A549 (cell line): ENCODE measurements at regions of chr20 and their contacts with region 1.

Region 1: DNA sequence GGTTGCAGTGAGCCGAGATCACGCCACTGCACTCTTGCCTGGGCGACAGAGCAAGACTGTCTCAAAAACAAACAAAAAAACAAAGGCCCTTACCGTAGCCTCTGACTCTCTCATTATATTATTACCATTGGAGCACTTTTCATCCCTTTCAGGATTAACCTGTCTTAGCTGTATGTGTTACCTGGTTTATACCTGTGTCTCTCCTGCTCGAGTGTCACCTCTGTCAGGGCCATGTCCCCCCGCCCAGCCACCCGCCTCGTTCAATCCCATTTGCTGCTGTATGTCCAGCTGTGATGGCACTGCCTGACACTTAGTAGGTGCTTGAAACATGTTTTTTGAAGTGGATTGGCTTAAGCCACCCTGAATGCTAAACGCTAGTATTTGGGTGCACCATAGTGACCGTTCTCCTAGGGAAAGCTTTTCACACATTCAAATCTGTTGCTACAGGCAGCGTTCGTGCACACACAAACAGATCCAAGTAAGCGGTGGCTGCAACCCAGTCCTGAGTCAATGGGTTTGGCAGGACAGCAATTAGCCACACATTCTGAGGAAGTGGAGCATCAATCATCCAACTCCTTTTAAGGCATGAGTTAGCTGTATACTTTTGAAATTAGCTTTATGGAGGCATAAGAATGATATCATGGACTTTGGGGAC is 98.9 kb upstream of the ZNF217 start:
- DNase-seq: no peak
- ATAC-seq: no peak; a peak in 1 of 6 replicates
- H3K4me3 ChIP-seq: no peak overlapping the region
- H3K27ac ChIP-seq: peak overlapping the region in 1 of 2 experiments; percentile 36; a peak in 2 of 6 replicates
- H3K4me1 ChIP-seq: peaks cover 8% of the 10 kb centered on the region; the same call in 2 of the 3 replicates
- CTCF ChIP-seq: no peak
- EP300 ChIP-seq: no peak
- POLR2A ChIP-seq: no peak
- RAD21 ChIP-seq: no peak

Region 2: DNA sequence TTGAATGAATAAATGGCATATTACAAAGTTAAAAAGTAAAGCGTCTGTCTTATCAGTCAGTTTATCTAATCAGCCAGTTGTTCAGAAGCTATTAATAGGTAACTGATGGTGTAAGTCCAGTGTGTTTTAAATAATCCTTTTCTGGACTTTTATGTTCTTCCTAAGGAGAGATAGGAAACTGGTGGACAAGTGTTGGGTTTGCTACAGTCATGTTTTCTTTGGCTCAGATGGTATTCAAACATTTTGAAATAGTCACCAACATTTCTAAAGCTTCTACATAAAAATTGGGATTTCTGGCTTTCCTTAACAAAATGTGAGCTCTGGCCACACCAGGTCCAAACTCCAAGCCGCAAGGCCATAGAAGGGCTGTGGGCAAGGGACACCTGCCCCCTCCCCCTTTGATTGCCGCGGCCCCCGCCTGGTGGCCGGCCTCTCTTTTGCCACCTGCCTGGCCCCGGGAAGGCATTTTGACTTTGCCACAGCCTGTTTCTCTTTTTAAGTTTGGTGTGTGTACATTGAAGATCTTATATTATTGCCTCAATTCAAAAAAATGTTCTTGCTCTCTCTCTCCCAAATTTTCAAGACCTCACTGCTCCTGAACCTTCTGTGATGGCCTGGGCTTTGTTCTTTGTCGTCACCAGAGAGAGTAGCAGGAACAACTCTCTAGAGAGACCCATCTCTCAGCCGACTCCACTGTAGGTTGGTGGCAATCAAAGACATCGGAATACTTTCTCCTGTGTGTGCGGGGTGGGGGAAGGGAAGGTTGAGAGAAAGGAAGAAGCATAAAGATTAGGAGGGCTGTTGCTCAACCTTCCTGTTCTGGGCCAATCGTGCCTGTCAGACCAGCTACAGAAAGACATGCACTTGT is 14.9 kb before region 1 on chr20:
- CTCF ChIA-PET with region 1: interaction called, 17 read pairs
- POLR2A ChIA-PET with region 1: no interaction called
- DNase-seq: peak; percentile 36 to 66
- ATAC-seq: peak; percentile 71 to 78
- H3K4me3 ChIP-seq: 0 out of 3 replicates have a peak overlapping the region, but pooled peaks have one; percentile 1
- H3K27ac ChIP-seq: peak overlapping the region; percentile 75 to 89
- H3K4me1 ChIP-seq: peaks cover 37% of the 10 kb centered on the region
- CTCF ChIP-seq: no peak
- EP300 ChIP-seq: no peak
- POLR2A ChIP-seq: no peak
- RAD21 ChIP-seq: no peak